ENCODE measurements at regions of chr1 and their contacts with region 1.

Region 1: GRCh38 chr1:167510244-167510643 is 8.1 kb downstream of the CD247 start:
- DNase-seq: no peak
- ATAC-seq: peak; percentile 18 to 25
- H3K4me3 Mint-ChIP-seq: peak overlapping the region; percentile 58 to 99 (median 76)
- H3K27ac Mint-ChIP-seq: peak overlapping the region; percentile 61 to 100 (median 84)
- H3K4me1 Mint-ChIP-seq: peaks cover 34 to 95% (median 82%) of the 10 kb centered on the region in 4 donors
- H3K27me3 Mint-ChIP-seq: no peaks in the 10 kb centered on the region

Region 2: GRCh38 chr1:167447521-167448136 is 62.6 kb before region 1 on chr1:
- POLR2A ChIA-PET with region 1: interaction called, 124 read pairs
- DNase-seq: peak; percentile 47 to 82 (median 74)
- ATAC-seq: peak; percentile 77 to 90
- H3K4me3 Mint-ChIP-seq: peak overlapping the region; percentile 70 to 88 (median 82)
- H3K27ac Mint-ChIP-seq: peak overlapping the region; percentile 90 to 99 (median 98)
- H3K4me1 Mint-ChIP-seq: peaks cover 43 to 92% (median 86%) of the 10 kb centered on the region in 4 donors
- H3K27me3 Mint-ChIP-seq: no peaks in the 10 kb centered on the region

Measured in naive thymus-derived CD8-positive, alpha-beta T cell (primary cell).